Activated T-helper 1 cell treated with anti-CD3 and anti-CD28 coated beads, Interleukin-12 subunit alpha, Interleukin-12 subunit beta, Interleukin-2, Interleukin-4 antibody, amounts not matched to agents 30 ng/mL and 10 ng/mL and 1 ng/mL, durations not matched to agents 14 hours and 24 hours and 36 hours (primary cell): ENCODE measurements at regions of chr10 and their contacts with region 1.

Region 1: DNA sequence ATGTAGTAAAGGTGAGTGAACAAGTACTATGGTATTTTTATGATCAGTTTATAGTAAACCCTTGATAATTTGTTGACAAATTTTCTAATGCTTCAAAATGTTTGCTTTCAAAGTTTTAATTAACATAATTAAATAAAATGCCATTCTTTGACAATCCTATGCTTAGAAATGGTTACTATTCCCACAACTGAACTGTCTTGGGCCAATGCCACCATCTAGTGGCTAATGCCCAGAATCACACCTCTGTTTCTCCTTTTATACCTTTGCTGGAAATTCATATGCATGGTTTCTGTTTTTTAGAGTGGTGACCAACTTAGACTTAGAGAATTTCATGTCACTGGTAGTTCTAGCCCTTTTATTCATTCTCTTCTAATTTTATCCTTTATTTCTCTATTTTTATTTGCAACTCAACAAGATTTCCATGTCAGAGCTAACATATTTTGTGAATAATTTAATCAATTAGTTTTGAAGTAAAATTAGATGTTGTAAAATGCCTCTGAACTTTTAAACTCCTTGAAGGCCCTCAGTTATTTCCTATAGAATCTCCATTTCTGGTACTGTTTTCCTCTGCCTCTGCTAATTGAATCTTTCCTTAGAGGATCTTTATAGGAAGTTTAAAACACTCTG is 31.1 kb downstream of the PCGF5 start:
- DNase-seq: peak; percentile 35
- H3K4me3 Mint-ChIP-seq: no peak overlapping the region
- H3K27ac Mint-ChIP-seq: no peak overlapping the region
- H3K4me1 Mint-ChIP-seq: peaks cover 5% of the 10 kb centered on the region
- H3K27me3 Mint-ChIP-seq: no peaks in the 10 kb centered on the region

Region 2: DNA sequence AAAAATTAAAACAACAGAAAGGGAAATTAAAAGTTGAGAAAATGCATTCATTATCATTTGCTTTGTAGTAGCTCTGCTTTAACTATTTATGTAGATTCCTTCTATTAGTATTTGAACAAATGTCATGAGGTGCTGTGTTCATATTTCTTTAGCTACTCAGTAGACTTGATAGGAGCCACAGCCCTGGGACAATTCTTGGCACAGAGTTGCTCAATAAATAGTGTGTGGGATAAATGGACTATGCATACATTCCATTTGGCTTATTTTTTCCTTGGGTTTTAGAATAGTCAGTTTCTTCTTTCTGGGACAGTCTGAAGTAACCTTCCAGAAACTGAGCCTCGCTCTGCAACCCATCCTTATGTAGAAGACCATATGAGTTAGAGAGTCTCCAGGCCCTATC is 366.4 kb before region 1 on chr10:
- intact Hi-C with region 1: loop called (anchors 1 kb)
- DNase-seq: no peak
- H3K4me3 Mint-ChIP-seq: no peak overlapping the region
- H3K27ac Mint-ChIP-seq: no peak overlapping the region
- H3K4me1 Mint-ChIP-seq: no peaks in the 10 kb centered on the region
- H3K27me3 Mint-ChIP-seq: no peaks in the 10 kb centered on the region

Region 3: DNA sequence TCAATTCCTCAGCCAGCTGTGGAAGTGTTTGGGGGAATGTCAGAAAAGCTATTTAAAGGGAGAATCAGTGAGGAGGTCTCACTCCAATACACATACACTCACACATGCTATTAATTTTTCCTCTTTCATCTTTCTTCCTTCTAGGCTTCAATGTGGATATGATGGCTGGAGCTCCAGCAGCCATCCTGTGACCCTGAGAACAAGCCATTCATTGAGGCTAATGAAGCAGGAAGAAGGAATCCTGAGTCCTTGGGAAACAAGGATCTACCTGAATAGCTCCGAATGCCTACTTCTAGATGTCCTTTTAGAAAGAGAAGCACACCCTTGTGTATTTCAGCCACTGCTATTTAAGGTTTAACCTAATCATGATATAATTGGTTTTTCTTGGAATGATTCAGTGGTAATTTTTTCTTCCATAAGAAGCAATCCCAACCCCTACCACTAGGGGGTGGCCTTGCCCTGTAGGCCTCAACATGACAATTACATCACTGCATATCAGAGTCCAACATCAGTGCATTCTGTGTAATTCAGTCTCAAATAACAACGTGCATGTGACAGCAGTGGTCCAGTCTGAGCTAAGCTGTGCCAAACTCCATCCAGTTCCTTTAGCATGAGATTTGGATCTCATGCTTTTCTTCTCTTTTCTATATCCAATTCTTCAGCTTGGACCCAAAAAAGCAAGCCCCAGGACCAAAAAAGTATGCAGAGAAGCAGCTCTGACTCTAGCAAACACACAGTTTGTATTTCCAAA is 245.4 kb before region 1 on chr10:
- intact Hi-C with region 1: loop called (anchors 1 kb)
- DNase-seq: peak; percentile 41
- H3K4me3 Mint-ChIP-seq: peak overlapping the region; percentile 8
- H3K27ac Mint-ChIP-seq: peak overlapping the region; percentile 58
- H3K4me1 Mint-ChIP-seq: peaks cover 27% of the 10 kb centered on the region
- H3K27me3 Mint-ChIP-seq: peaks cover 28% of the 10 kb centered on the region

Region 4: GRCh38 chr10:91088300-91089140 is 163.0 kb before region 1 on chr10:
- intact Hi-C with region 1: loop called (anchors 1 kb)
- DNase-seq: no peak
- H3K4me3 Mint-ChIP-seq: no peak overlapping the region
- H3K27ac Mint-ChIP-seq: no peak overlapping the region
- H3K4me1 Mint-ChIP-seq: no peaks in the 10 kb centered on the region
- H3K27me3 Mint-ChIP-seq: peaks cover 7% of the 10 kb centered on the region

Region 5: DNA sequence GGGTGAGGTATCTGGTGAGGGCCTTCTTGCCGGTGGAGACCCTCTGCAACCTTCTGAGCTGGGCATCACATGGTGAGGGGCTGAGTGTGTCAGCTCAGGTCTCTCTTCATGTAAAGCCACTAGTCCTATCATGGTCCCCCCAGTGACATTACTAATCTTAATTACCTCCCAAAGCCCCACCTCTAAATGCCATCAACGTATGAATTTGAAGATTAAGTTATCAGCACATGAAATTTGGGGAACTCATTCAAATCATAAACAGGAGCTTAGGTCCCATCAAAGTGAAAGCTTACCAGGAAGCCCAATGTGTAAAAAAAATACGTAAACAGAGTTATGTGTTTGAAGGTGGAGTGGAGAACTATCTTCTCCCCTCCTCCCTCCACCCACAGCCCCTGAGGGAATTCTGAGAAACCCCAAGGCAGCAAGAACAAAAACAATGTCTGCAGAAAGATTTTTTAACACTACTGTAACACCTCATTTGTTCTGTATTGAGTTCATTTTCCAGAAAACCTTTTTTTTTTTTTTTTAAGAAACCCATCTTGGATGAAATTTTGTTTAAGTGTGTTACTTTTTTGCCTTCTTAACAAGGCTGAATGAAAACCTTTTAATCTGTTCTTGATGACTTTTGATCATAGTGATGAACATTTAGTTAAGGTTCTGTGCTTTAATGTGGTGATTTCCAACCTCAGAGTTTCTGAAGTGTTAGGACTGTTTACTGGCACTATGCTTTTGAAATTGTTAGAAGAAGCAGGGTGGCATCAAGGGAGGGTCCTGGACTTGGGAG is 50.1 kb before region 1 on chr10:
- intact Hi-C with region 1: loop called (anchors 2 kb)
- DNase-seq: peak; percentile 47
- H3K4me3 Mint-ChIP-seq: peak overlapping the region; percentile 68
- H3K27ac Mint-ChIP-seq: peak overlapping the region; percentile 92
- H3K4me1 Mint-ChIP-seq: peaks cover 81% of the 10 kb centered on the region
- H3K27me3 Mint-ChIP-seq: no peaks in the 10 kb centered on the region

Region 6: DNA sequence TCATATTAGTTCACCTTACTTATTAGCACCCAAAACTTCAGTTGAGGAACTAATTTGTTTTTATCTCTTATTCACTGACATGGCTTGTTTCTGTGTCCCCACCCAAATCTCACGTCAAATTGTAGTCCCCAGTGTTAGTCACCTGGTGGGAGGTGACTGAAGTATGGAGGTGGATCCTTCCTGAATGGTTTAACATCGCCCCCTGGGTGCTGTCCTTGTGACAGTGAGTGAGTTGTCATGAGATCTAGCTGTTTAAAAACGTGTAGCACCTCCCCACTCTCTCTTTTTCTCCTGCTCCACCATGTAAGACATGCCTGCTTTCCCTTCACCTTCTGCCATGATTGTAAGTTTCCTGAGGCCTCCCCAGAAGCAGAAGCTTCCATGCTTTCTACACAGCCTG is 83.6 kb after region 1 on chr10:
- intact Hi-C with region 1: no loop called
- DNase-seq: no peak
- H3K4me3 Mint-ChIP-seq: no peak overlapping the region
- H3K27ac Mint-ChIP-seq: no peak overlapping the region
- H3K4me1 Mint-ChIP-seq: no peaks in the 10 kb centered on the region
- H3K27me3 Mint-ChIP-seq: peaks cover 5% of the 10 kb centered on the region